ENCODE measurements at regions of chrX and their contacts with region 1.

Region 1: DNA sequence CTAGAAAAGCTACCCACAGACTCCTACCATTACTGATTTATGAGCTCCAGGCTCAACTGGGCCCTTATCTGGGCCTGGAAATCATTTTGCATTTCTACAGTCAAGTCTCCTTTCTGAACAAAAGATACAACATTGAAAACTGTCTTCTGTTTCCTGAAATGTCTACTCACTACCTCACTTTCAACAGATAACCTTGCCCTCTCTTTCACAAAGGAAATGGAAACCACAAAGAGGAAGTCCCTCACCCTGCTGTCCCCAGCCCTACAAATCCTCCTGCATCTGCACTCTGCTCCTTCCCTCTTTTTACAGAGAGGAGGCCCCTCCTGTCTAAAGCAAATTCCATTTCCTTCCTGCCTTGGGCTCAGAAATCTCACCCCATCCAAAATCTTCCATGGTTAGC is 24.8 kb upstream of the CYBB start:
- DNase-seq: peak; percentile 99

Region 2: GRCh38 chrX:37825209-37825842 is 70.3 kb after region 1 on chrX:
- in situ Hi-C with region 1: loop called (anchors 10 kb)
- DNase-seq: peak; percentile 77